Activated CD4-positive, alpha-beta T cell treated with anti-CD3 and anti-CD28 coated beads, Interleukin-2, amount 10 ng/mL, durations not matched to agents 24 days and 14 days (primary cell): ENCODE measurements at regions of chr1 and their contacts with region 1.

Region 1: GRCh38 chr1:3796215-3797061 is at the start of gene LRRC47:
- DNase-seq: peak; percentile 99
- H3K4me3 Mint-ChIP-seq: peak within 1 kb of the TSS; percentile 88
- H3K27ac Mint-ChIP-seq: peak within 1 kb of the TSS; percentile 90
- H3K4me1 Mint-ChIP-seq: peaks cover 31% of the 10 kb centered on the region
- H3K27me3 Mint-ChIP-seq: peaks cover 10% of the 10 kb centered on the region
- total RNA-seq, gene LRRC47: 40.8 and 46.0 TPM in 2 replicates

Region 2: DNA sequence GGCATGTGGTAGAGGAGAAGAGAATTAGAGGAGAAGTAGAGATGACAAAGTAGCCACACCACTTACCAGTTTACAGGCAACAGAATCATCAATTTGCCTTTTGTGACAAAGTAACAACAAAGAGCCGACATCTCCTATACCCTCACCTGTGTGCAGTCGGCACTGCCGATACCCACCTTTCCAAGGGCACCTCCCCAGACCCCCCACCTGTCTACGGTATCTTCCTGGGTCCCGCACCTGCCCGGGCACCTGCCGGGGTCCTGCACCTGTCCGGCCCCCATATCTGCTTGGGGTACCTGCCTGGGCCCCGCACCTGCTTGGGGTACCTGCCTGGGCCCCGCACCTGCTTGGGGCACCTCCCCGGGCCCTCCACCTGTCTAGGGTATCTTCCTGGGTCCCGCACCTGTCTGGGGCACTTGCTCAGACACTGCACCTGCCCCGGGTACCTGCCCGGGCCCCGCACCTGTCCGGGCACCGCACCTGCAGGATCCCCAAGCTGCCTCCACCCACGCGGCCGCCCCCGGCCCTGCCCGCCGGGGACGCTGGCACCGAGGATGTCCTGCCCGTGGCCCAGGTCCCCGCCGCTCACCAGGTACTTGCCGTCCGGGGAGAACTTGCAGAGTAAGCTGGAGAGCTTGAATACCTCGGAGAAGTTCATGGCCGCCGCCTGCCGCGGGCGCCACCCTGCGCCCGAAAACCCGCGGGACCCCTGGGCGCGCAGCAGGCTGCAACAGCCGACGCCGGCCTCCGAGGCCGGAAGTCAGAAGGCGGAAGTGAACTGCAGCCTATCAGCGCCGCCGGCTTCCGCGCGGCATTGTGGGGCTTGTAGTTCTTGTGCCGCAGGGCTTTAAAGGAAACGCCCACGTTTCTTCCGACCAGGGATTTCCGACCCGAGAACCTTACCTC is 146.8 kb before region 1 on chr1 and contains the start of gene WRAP73:
- intact Hi-C with region 1: loop called (anchors 1 kb)
- DNase-seq: peak; percentile 97
- H3K4me3 Mint-ChIP-seq: peak within 1 kb of the TSS; percentile 80
- H3K27ac Mint-ChIP-seq: peak within 1 kb of the TSS; percentile 53
- H3K4me1 Mint-ChIP-seq: peaks cover 20% of the 10 kb centered on the region
- H3K27me3 Mint-ChIP-seq: peaks cover 26% of the 10 kb centered on the region
- total RNA-seq, gene WRAP73: 41.3 and 44.7 TPM in 2 replicates

Region 3: DNA sequence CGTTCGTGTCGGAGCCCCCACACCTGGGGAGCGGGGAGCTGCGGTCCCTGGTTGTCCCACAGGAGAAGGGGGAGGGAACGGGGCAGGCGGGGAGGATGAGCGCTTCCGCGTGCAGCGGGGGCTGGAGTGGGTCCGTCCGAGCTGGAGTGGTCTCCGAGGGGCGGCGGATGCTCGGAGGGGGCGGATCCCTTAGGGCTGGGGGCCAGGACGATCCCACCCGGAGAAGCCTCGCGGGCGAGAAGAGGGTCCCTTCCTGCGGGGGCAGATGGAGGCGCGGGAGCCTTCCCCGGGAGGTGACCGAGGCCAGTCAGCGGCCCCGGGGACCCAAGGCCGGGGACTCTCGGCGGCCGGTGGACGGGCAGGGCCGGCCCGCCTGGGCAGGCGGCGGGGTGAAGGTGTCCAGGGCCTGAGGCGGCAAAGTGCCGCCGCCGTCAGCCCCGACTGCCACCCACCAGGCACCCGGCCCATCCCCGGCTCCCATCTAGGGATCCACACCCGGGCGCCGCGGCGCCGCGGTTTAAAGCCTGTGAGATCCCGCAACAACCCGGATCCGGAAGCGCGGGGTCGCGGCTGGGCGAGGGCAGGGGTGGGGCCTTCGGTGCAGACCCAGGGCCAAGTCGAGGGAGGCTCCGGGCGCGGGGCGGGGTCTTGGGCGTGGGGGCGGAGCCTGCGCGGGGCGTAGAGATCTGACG is 49.5 kb before region 1 on chr1:
- intact Hi-C with region 1: loop called (anchors 1 kb)
- DNase-seq: peak; percentile 97
- H3K4me3 Mint-ChIP-seq: peak overlapping the region; percentile 81
- H3K27ac Mint-ChIP-seq: peak overlapping the region; percentile 41
- H3K4me1 Mint-ChIP-seq: peaks cover 18% of the 10 kb centered on the region
- H3K27me3 Mint-ChIP-seq: no peaks in the 10 kb centered on the region

Region 4: GRCh38 chr1:3856908-3857790 is 60.7 kb after region 1 on chr1 and contains the starts of genes CEP104 and DFFB:
- intact Hi-C with region 1: loop called (anchors 1 kb)
- DNase-seq: peak; percentile 99
- H3K4me3 Mint-ChIP-seq: peak within 1 kb of the TSS; percentile 96
- H3K27ac Mint-ChIP-seq: peak within 1 kb of the TSS; percentile 86
- H3K4me1 Mint-ChIP-seq: peaks cover 17% of the 10 kb centered on the region
- H3K27me3 Mint-ChIP-seq: no peaks in the 10 kb centered on the region
- total RNA-seq, gene CEP104: 46.2 and 48.1 TPM in 2 replicates
- total RNA-seq, gene DFFB: 15.0 and 15.9 TPM in 2 replicates

Region 5: GRCh38 chr1:3900119-3900968 is 103.9 kb after region 1 on chr1 and contains the start of gene C1orf174:
- intact Hi-C with region 1: loop called (anchors 1 kb)
- DNase-seq: peak; percentile 98
- H3K4me3 Mint-ChIP-seq: peak within 1 kb of the TSS; percentile 97
- H3K27ac Mint-ChIP-seq: peak within 1 kb of the TSS; percentile 96
- H3K4me1 Mint-ChIP-seq: peaks cover 42% of the 10 kb centered on the region
- H3K27me3 Mint-ChIP-seq: no peaks in the 10 kb centered on the region
- total RNA-seq, gene C1orf174: 50.5 and 51.5 TPM in 2 replicates